Transverse colon (tissue), 4 donors: ENCODE measurements at regions of chr9 and their contacts with region 1.

Region 1: GRCh38 chr9:130243015-130243734 is 22.4 kb upstream of the HMCN2 start:
- DNase-seq: peak; percentile 79
- H3K4me3 ChIP-seq: no peak overlapping the region
- H3K27ac ChIP-seq: no peak overlapping the region
- H3K4me1 ChIP-seq: peaks cover 0 to 7% (median 4%) of the 10 kb centered on the region in 4 donors
- H3K27me3 ChIP-seq: no peaks in the 10 kb centered on the region
- CTCF ChIP-seq: peak; percentile 91 to 98 (median 97)
- EP300 ChIP-seq: no peak
- POLR2A ChIP-seq: no peak

Region 2: GRCh38 chr9:129884220-129885017 is 358.8 kb before region 1 on chr9:
- in situ Hi-C with region 1: loop called in 2 of 4 experiments (anchors 25 kb)
- intact Hi-C with region 1: loop called (anchors 10 kb)
- DNase-seq: peak; percentile 96
- H3K4me3 ChIP-seq: peak overlapping the region in 3 of 4 donors; percentile 23 to 53 (median 25)
- H3K27ac ChIP-seq: peak overlapping the region; percentile 85 to 90 (median 87)
- H3K4me1 ChIP-seq: peaks cover 23 to 54% (median 37%) of the 10 kb centered on the region in 4 donors
- H3K27me3 ChIP-seq: no peaks in the 10 kb centered on the region
- CTCF ChIP-seq: no peak
- EP300 ChIP-seq: no peak
- POLR2A ChIP-seq: peak; percentile 63

Region 3: DNA sequence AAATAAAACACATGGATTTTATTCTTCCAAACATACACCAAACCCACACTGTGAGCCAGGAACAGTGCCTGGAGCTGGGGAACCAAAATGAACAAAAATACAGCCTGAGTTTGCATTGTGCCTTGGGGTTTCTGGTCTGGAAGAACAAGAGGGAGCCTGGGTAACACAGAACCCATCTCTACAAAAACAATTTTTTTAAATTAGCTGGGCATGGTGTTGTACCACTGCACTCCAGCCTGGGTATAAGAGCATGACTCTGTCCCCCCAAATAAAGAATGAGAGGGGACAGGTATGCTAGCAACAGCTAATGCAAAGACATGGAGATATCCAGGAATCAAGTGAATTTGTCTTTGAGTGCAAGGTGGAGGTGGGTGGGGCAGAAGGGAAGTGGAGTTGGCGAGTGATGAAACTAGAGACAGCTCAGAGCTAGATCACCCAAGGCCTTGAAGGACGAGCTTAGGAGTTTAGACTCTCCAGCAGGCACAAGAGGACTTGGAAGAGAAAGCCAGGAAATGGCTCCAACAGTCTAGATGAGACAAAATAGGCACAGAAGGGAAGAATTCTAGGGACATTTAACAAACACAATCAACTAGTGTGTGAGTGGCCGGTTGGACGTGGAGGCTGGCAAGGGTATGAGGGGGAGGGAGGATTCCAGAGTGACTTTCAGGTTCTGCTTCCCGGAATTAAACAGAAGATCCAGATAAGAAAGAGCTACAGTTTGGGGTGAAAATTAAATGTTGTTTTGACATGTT is 247.6 kb before region 1 on chr9:
- in situ Hi-C with region 1: no loop called
- intact Hi-C with region 1: no loop called
- DNase-seq: no peak
- H3K4me3 ChIP-seq: no peak overlapping the region
- H3K27ac ChIP-seq: peak overlapping the region; percentile 65 to 76 (median 74)
- H3K4me1 ChIP-seq: peaks cover 22 to 49% (median 30%) of the 10 kb centered on the region in 4 donors
- H3K27me3 ChIP-seq: no peaks in the 10 kb centered on the region
- CTCF ChIP-seq: no peak
- EP300 ChIP-seq: no peak
- POLR2A ChIP-seq: no peak

Region 4: GRCh38 chr9:130343445-130343918 is 100.3 kb after region 1 on chr9:
- in situ Hi-C with region 1: no loop called
- intact Hi-C with region 1: loop called (anchors 5 kb)
- DNase-seq: no peak
- H3K4me3 ChIP-seq: no peak overlapping the region
- H3K27ac ChIP-seq: no peak overlapping the region
- H3K4me1 ChIP-seq: peaks cover 0 to 3% (median 0%) of the 10 kb centered on the region in 4 donors
- H3K27me3 ChIP-seq: no peaks in the 10 kb centered on the region
- CTCF ChIP-seq: peak; percentile 70 to 79 (median 74)
- EP300 ChIP-seq: no peak
- POLR2A ChIP-seq: no peak